Naive thymus-derived CD8-positive, alpha-beta T cell (primary cell): ENCODE measurements at regions of chr11 and their contacts with region 1.

Region 1: GRCh38 chr11:128297091-128297651 is 290.2 kb downstream of the ETS1 start:
- DNase-seq: peak in 7 of 10 donors; percentile 20 to 68 (median 39)
- ATAC-seq: peak; percentile 62 to 63
- H3K4me3 Mint-ChIP-seq: peak overlapping the region in 9 of 10 donors; percentile 17 to 94 (median 71)
- H3K27ac Mint-ChIP-seq: peak overlapping the region; percentile 95 to 100 (median 99)
- H3K4me1 Mint-ChIP-seq: peaks cover 52 to 95% (median 88%) of the 10 kb centered on the region in 4 donors
- H3K27me3 Mint-ChIP-seq: no peaks in the 10 kb centered on the region

Region 2: DNA sequence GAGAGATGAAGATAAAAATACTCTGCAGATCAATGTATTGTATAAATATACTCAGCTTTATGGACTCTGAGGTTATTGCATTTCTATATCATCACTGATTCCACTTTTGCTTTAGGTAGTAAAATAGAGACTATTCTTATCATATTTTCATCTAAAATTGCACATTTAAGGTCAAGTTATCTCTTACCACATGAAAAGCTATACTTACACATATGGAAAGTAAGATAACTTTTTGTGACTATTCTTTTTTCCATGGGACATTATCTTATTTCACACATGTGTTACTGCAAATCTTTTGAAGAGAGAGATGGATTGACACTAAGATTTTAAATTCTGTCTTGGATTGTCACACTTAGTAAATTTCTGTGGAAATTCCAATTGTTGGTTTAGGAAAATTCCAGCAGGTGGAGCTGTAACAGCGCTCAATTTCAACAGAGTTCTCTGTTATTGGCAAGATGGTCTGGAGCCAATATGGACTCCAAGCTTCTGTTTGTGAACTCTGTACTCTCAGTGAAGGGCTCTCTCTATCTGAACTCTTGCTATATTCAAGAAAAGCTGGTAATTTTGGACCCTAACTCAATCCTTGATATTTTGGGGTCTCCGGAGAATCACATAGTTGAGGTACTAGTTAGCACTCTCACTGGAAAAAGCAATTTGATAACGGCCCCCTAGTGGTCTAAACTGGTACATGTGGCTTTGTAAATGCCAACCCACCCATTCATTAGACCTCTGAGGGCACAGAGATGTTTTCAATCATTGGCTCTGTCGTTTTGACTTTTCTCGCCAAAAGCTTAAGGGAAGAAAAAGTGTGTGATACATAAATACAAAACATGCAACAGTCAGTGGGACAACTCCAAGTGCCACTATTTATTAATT is 139.5 kb before region 1 on chr11:
- POLR2A ChIA-PET with region 1: no interaction called
- DNase-seq: peak; percentile 22 to 90 (median 58)
- ATAC-seq: peak; percentile 96
- H3K4me3 Mint-ChIP-seq: peak overlapping the region; percentile 67 to 87 (median 80)
- H3K27ac Mint-ChIP-seq: peak overlapping the region in 8 of 10 donors; percentile 17 to 84 (median 54)
- H3K4me1 Mint-ChIP-seq: peaks cover 0 to 7% (median 3%) of the 10 kb centered on the region in 4 donors
- H3K27me3 Mint-ChIP-seq: peaks cover 0 to 2% (median 0%) of the 10 kb centered on the region in 5 donors

Region 3: DNA sequence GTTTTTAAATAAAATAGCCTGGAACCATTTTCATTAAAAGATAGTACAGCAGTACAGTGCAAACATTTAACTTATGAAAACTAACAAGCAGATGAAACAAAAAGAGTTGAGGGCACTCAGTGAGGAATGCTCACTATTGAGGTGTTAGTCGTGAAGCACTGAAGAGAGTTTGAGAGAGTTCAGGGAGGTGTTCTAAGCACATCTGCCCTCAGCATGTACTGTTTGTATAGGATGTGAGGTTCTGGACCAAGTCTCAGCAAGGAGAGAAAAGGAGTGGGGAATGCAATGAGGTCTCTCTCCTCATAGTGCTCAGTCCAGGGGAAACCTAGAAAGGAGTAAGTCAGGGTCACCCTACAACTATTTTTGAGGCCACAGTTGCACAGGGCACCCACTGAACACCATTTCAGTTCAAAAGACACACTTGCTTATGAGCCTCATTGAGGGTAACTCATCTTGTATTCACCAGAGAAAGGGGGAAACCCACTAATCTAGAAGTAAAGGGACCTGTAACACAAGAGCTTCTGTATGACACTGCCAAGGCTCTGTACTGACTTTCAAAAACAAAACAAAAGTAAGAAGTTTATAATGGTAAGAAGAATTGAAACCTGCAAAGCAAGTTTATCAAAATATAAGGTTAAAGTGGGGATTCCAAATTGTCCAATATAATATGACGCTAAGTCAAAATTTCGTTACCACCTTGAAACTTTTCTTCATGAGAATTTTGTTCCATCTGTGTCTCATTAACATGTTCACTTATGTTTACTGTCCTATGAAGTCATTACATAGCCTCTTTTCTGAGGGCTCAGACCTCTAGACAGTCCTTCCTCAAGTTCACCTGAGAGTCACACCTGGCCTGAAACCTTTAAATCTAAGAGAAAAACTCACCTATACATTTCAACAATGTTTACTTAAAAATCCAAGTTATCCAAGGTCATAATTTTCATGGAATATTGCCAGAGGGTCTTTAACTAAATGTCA is 14.9 kb after region 1 on chr11:
- POLR2A ChIA-PET with region 1: interaction called, 178 read pairs
- DNase-seq: peak in 2 of 10 donors; percentile 53 to 65
- ATAC-seq: peak; percentile 89 to 97
- H3K4me3 Mint-ChIP-seq: peak overlapping the region in 8 of 10 donors; percentile 1 to 73 (median 56)
- H3K27ac Mint-ChIP-seq: peak overlapping the region; percentile 90 to 99 (median 96)
- H3K4me1 Mint-ChIP-seq: peaks cover 32 to 84% (median 80%) of the 10 kb centered on the region in 4 donors
- H3K27me3 Mint-ChIP-seq: no peaks in the 10 kb centered on the region